Thyroid gland (tissue), 4 donors: ENCODE measurements at regions of chr6 and their contacts with region 1.

Region 1: DNA sequence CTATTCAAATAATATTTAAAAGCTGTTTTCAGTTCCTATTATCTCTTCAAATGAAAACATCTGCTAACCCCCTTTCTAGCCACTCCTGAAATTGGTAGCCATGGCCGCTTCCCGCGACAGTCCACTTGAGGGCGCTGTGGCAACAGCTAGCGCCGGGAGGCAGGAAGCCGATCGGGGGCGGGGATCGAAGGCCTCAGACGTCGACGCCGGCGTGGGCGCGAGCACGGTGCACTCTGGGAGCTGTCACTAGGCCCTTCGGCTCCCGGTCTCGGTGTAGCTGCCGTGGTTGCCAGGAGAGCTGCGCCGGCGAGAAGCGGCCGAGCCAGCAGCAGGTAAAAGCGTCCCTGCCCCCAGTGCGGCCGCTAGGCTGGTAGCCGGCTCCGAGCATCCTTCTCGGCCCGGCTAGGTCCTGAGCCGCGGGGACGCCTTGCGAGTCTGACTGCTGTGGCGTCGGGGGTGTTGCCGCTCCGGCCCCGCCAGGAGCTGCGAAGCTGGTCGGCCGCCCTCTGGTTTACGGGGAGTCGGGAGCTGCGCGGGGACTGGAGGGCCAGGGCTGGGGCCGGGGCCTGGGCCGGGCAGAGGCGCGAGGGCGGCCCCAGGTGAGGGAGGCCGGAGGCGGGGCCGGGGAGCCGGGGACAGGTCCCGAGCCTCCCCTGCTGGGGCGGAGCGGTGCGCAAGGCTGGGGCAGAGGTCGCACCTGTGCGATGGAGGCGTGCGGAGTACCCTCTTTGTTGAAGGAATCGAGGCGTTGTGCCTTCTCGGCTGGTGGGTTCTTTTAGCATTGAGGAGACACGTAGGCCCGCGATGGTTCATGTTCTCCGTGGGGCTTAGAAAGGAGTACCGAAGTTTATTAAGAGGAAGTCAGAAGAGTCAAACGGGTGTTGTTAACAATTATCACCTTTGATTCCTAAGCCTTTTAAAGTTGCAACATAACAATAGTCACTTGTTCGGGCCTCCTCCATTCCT is at the start of gene DOP1A:
- DNase-seq: peak; percentile 98 to 99
- H3K4me3 ChIP-seq: peak within 1 kb of the TSS; percentile 38 to 90 (median 80)
- H3K27ac ChIP-seq: peak within 1 kb of the TSS; percentile 70 to 91 (median 86)
- H3K4me1 ChIP-seq: peaks cover 18 to 32% of the 10 kb centered on the region in 2 donors
- H3K27me3 ChIP-seq: no peaks in the 10 kb centered on the region
- CTCF ChIP-seq: peak; percentile 81 to 97 (median 92)
- POLR2A ChIP-seq: peak in 1 of 2 donors; percentile 85
- total RNA-seq, gene DOP1A: 31.6 to 58.4 (median 54.2) TPM

Region 2: DNA sequence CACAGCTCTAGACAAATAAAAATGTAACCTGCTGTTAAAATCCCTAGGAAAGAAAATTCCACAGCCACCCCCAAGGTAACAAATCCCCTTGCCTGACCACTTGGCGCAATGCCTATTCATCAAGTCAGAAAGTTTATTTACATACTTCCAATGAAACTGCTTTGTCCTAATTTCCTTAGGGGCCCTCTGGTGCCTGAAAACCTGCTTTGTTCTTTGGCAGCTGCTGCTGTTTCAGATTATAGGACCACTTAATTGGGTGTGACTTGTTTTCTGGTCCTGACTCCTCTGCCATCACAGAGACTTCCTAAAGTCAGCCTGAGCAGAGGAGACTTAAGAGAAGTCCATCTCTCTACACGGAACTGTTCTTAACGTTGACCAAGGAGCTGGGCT is 325.7 kb before region 1 on chr6:
- intact Hi-C with region 1: no loop called
- DNase-seq: no peak
- H3K4me3 ChIP-seq: no peak overlapping the region
- H3K27ac ChIP-seq: no peak overlapping the region
- H3K4me1 ChIP-seq: no peaks in the 10 kb centered on the region
- H3K27me3 ChIP-seq: no peaks in the 10 kb centered on the region
- CTCF ChIP-seq: no peak
- POLR2A ChIP-seq: no peak

Region 3: DNA sequence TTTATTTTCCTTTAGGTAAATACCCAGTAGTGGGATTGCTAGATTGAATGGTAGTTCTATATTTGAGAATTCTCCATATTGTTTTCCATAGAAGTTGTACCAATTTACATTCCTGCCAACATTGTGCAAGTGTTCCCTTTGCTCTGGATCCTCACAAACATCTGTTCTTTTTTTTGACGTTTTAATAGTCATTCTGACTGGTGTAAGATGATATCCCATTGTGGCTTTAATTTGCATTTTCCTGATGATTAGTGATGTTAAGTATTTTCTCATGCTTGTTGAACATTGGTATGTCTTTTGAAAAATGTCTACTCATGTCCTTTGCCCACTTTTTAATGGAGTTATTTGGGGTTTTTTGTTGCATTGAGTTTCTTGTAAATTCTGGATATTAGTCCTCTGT is 87.6 kb before region 1 on chr6:
- intact Hi-C with region 1: no loop called
- DNase-seq: no peak
- H3K4me3 ChIP-seq: no peak overlapping the region
- H3K27ac ChIP-seq: no peak overlapping the region
- H3K4me1 ChIP-seq: no peaks in the 10 kb centered on the region
- H3K27me3 ChIP-seq: no peaks in the 10 kb centered on the region
- CTCF ChIP-seq: no peak
- POLR2A ChIP-seq: no peak

Region 4: DNA sequence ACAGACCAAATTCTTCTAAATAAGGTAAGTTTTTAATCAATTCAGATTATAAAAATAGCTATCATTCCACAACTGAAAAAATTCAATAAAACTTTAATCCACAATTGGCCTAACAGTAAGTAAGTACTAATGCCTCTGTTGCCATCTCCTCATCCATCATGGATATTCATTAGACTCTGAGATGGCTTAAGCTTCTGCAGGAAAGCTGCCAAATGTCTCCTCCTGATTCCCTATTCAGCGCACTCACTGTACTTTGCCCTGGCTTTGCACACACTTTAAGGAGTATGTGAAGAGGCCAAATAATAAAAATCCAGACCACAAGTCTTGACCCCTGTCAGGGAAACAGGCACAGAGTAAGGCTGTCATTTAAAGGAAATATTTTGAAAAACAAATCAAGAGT is 101.8 kb after region 1 on chr6:
- intact Hi-C with region 1: no loop called
- DNase-seq: no peak
- H3K4me3 ChIP-seq: no peak overlapping the region
- H3K27ac ChIP-seq: no peak overlapping the region
- H3K4me1 ChIP-seq: no peaks in the 10 kb centered on the region
- H3K27me3 ChIP-seq: no peaks in the 10 kb centered on the region
- CTCF ChIP-seq: no peak
- POLR2A ChIP-seq: no peak

Region 5: DNA sequence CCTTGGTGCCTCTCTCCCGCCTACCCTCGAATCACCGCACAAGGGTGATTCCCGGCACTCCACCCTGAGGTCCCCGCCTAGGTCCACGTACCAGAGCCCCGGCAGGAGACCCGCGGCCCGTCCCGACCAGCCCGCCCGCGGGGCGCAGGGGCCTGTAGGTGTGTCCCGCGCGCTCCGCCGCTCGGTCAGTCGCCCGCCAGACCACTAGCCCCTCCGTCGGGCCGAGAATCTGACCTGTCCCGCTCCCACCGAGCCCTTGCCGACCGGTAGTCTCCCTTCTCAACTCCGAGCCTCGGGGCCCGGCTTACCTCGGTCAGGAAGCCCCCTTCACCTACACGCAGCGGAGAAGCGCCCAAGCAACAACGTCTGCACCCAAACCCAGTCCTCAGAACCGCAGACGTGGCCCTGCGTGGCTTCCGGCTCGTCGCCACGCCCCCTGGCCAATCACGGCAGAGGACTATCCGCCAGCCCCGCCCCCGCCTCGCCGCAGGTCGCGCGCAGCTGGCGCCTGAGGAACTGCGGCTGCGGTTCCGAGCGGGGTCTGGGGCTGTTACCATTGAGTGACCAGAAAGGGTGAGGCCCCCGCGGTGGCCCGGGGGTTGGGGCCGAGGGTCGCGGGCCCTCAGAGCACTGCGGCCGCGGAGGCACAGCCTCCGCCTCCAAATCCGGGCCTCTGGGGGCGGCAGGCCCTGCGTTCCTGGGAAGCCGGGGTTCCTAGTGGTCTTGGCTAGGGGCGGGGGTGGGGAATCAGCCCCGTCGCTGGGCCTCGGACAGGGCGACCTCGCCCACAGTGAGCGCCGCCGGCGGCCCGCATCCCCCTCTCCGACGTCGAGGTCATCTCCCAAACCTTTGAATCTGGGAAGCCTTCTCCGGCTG is 125.4 kb after region 1 on chr6 and contains the starts of genes PGM3 and RWDD2A:
- intact Hi-C with region 1: loop called (anchors 10 kb)
- DNase-seq: peak; percentile 92
- H3K4me3 ChIP-seq: peak within 1 kb of the TSS; percentile 86 to 95 (median 93)
- H3K27ac ChIP-seq: peak within 1 kb of the TSS; percentile 46 to 83 (median 79)
- H3K4me1 ChIP-seq: peaks cover 8 to 11% of the 10 kb centered on the region in 2 donors
- H3K27me3 ChIP-seq: no peaks in the 10 kb centered on the region
- CTCF ChIP-seq: no peak
- POLR2A ChIP-seq: peak; percentile 2 to 94
- total RNA-seq, gene PGM3: 25.8 to 61.1 (median 32.1) TPM
- total RNA-seq, gene RWDD2A: 4.6 to 5.8 (median 5.5) TPM